ENCODE measurements at regions of chr12 and their contacts with region 1.

Region 1: GRCh38 chr12:81128930-81129554 is 51.2 kb downstream of the ACSS3 start:
- DNase-seq: no peak
- H3K4me3 ChIP-seq: no peak overlapping the region
- H3K27ac ChIP-seq: no peak overlapping the region
- H3K4me1 ChIP-seq: no peaks in the 10 kb centered on the region
- H3K27me3 ChIP-seq: no peaks in the 10 kb centered on the region
- CTCF ChIP-seq: peak in 2 of 3 experiments; percentile 63 to 82; a peak in 3 of 4 replicates
- EP300 ChIP-seq: no peak
- POLR2A ChIP-seq: no peak
- RAD21 ChIP-seq: peak; percentile 71 to 81

Region 2: DNA sequence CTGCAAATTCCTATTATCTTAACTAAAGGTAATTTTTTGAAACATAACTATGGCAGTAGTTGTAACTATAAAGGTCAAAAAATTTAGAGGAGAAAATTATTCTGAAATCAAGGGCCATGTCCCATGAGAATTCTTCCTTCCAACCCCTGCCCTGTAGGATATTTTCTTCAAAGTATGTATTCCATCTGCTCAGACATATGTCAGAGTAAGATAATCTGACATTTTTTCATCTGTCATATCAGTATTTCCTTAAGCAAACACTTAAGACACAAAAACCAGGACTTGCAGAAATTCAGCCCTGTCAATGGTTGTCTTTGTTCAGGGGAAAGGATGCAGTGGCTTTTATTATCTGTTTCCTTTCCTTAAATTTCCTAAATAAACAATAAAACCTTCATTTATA is 14.8 kb before region 1 on chr12:
- CTCF ChIA-PET with region 1: interaction called, 11 read pairs
- POLR2A ChIA-PET with region 1: no interaction called
- DNase-seq: no peak
- H3K4me3 ChIP-seq: no peak overlapping the region
- H3K27ac ChIP-seq: no peak overlapping the region
- H3K4me1 ChIP-seq: no peaks in the 10 kb centered on the region
- H3K27me3 ChIP-seq: peaks cover 0 to 1% (median 0%) of the 10 kb centered on the region in 4 experiments; a peak in 1 of 7 replicates
- CTCF ChIP-seq: no peak
- EP300 ChIP-seq: no peak
- POLR2A ChIP-seq: no peak
- RAD21 ChIP-seq: no peak

Region 3: GRCh38 chr12:81143067-81143466 is 14.0 kb after region 1 on chr12:
- CTCF ChIA-PET with region 1: interaction called, 11 read pairs
- POLR2A ChIA-PET with region 1: no interaction called
- DNase-seq: no peak
- H3K4me3 ChIP-seq: no peak overlapping the region
- H3K27ac ChIP-seq: no peak overlapping the region
- H3K4me1 ChIP-seq: no peaks in the 10 kb centered on the region
- H3K27me3 ChIP-seq: no peaks in the 10 kb centered on the region
- CTCF ChIP-seq: no peak
- EP300 ChIP-seq: no peak
- POLR2A ChIP-seq: no peak
- RAD21 ChIP-seq: no peak

Region 4: GRCh38 chr12:81245907-81246611 is 117.0 kb after region 1 on chr12:
- CTCF ChIA-PET with region 1: no interaction called
- POLR2A ChIA-PET with region 1: no interaction called
- DNase-seq: peak in 1 of 2 experiments; percentile 48
- H3K4me3 ChIP-seq: no peak overlapping the region
- H3K27ac ChIP-seq: no peak overlapping the region
- H3K4me1 ChIP-seq: peaks cover 0 to 6% (median 0%) of the 10 kb centered on the region in 4 experiments; a peak in 3 of 7 replicates
- H3K27me3 ChIP-seq: no peaks in the 10 kb centered on the region
- CTCF ChIP-seq: no peak
- EP300 ChIP-seq: no peak
- POLR2A ChIP-seq: no peak
- RAD21 ChIP-seq: no peak